ENCODE measurements at regions of chr22 and their contacts with region 1.

Region 1: DNA sequence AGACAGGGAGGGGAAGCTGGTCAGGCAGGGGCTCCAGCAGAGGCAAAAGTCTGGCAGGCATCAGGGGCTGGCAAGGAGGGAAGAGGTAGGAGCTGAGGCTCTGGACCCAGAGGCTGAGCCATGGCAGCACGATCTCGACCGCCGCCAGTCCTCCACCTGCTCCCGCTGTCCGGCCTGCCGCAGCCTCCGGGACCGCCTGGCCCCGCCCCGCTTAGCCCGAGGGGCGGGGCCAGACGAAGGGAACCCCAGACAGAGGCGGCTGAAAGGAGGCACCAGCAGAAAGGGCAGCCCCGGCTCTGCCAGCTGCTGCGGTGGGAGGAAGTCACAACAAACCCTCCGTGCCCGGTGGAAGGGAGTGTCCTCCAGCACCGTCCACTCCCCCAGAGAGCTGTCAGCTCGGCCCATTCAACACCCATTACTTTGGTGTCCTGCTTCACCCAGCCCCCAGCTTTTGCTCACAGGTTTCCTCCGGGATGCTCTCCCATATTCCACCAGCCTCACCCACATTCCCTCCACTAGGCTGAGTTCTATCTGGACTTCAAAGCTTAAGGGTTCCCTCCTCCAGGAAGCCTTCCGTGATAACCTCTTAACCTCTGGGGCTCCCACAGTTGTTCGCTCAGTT is at the start of gene MFNG:
- DNase-seq: peak; percentile 56 to 79 (median 64)
- ATAC-seq: peak; percentile 45 to 59
- H3K4me3 Mint-ChIP-seq: peak within 1 kb of the TSS; percentile 93 to 98 (median 96)
- H3K27ac Mint-ChIP-seq: peak within 1 kb of the TSS; percentile 95 to 100 (median 98)
- H3K4me1 Mint-ChIP-seq: peaks cover 59 to 91% (median 69%) of the 10 kb centered on the region in 4 donors
- H3K27me3 Mint-ChIP-seq: peaks cover 0 to 2% (median 0%) of the 10 kb centered on the region in 5 donors
- polyA plus RNA-seq, gene MFNG: 290 to 401 (median 329) TPM

Region 2: DNA sequence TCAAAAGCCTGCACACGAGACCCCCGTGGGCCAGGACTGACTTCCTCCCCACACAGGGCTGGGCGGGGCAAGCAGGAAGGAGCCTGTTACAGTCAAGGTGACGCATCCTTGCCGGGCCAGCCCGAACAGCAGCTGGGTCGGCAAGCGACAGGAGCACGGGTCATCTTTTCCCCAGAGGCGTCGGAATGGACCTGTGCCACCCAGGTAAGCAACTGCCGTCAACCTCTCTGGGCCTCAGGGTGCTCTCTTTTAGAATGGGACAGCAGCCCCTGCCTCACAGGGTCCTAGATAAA is 204.0 kb before region 1 on chr22 and contains the start of gene CYTH4:
- POLR2A ChIA-PET with region 1: interaction called, 10 read pairs
- DNase-seq: peak; percentile 63 to 85 (median 66)
- ATAC-seq: peak; percentile 84 to 87
- H3K4me3 Mint-ChIP-seq: peak within 1 kb of the TSS; percentile 90 to 99 (median 94)
- H3K27ac Mint-ChIP-seq: peak within 1 kb of the TSS; percentile 93 to 100 (median 98)
- H3K4me1 Mint-ChIP-seq: peaks cover 40 to 84% (median 62%) of the 10 kb centered on the region in 4 donors
- H3K27me3 Mint-ChIP-seq: no peaks in the 10 kb centered on the region
- polyA plus RNA-seq, gene CYTH4: 48.9 to 60.8 (median 54.6) TPM

Region 3: GRCh38 chr22:37472418-37473006 is 13.8 kb before region 1 on chr22:
- POLR2A ChIA-PET with region 1: interaction called, 36 read pairs
- DNase-seq: peak in 8 of 10 donors; percentile 28 to 75 (median 46)
- ATAC-seq: peak; percentile 42 to 58
- H3K4me3 Mint-ChIP-seq: no peak overlapping the region
- H3K27ac Mint-ChIP-seq: peak overlapping the region in 8 of 10 donors; percentile 26 to 89 (median 56)
- H3K4me1 Mint-ChIP-seq: peaks cover 7 to 33% (median 18%) of the 10 kb centered on the region in 4 donors
- H3K27me3 Mint-ChIP-seq: no peaks in the 10 kb centered on the region

Region 4: DNA sequence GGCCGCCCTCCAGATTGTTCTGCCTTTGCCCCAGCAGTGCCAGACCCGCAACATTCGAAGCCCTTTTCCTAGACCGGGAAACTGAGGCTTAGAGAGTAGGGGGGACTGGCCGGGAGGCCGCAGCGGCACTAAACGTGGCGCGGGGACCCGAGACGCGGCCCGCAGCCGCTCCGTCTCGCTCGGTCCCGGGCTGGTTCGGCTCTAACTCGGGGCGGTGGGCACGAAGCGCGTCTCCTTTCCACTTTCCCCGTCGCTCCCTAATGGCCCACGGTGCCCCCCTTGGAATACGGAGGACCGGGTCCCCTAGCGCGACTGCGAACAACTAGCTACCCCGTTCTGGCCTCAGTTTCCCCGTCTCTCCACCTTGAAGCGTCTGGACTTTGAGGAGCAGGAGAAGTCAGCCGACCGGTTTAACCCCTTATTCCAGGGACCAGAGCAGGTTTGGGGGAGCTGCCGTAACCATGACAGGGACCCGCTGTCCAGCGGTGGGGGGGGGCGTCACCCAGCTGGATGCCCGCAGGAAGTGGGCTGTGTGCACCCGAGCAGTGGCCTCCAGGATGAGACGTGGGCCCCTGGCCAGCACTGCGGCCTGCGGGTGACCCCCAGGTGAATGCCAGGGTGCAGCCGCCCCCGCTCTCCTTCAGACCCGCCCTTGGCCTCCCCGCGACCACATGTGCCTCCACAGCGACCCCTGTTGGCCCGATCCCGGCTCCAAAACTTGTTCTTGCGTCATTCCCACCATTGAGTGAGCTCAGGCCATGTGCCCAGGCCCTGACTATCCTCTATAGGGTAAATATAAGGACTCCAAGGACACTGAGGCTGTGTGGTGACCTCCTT is 75.1 kb after region 1 on chr22:
- POLR2A ChIA-PET with region 1: no interaction called
- DNase-seq: peak; percentile 63 to 85 (median 75)
- ATAC-seq: peak; percentile 55 to 69
- H3K4me3 Mint-ChIP-seq: peak overlapping the region; percentile 58 to 88 (median 77)
- H3K27ac Mint-ChIP-seq: peak overlapping the region in 4 of 10 donors; percentile 14 to 87 (median 33)
- H3K4me1 Mint-ChIP-seq: peaks cover 13 to 36% (median 29%) of the 10 kb centered on the region in 4 donors
- H3K27me3 Mint-ChIP-seq: peaks cover 14 to 47% (median 32%) of the 10 kb centered on the region in 5 donors

Region 5: GRCh38 chr22:37594237-37594636 is 107.9 kb after region 1 on chr22:
- POLR2A ChIA-PET with region 1: interaction called, 12 read pairs
- DNase-seq: peak in 1 of 10 donors; percentile 8
- ATAC-seq: no peak
- H3K4me3 Mint-ChIP-seq: no peak overlapping the region
- H3K27ac Mint-ChIP-seq: no peak overlapping the region
- H3K4me1 Mint-ChIP-seq: peaks cover 8 to 15% (median 13%) of the 10 kb centered on the region in 4 donors
- H3K27me3 Mint-ChIP-seq: no peaks in the 10 kb centered on the region

Region 6: GRCh38 chr22:37633625-37634416 is 147.5 kb after region 1 on chr22:
- POLR2A ChIA-PET with region 1: no interaction called
- DNase-seq: peak in 9 of 10 donors; percentile 26 to 74 (median 54)
- ATAC-seq: peak; percentile 68 to 72
- H3K4me3 Mint-ChIP-seq: peak overlapping the region; percentile 70 to 89 (median 80)
- H3K27ac Mint-ChIP-seq: peak overlapping the region; percentile 91 to 97 (median 96)
- H3K4me1 Mint-ChIP-seq: peaks cover 37 to 86% (median 80%) of the 10 kb centered on the region in 4 donors
- H3K27me3 Mint-ChIP-seq: no peaks in the 10 kb centered on the region